ENCODE measurements at regions of chr20 and their contacts with region 1.

Region 1: DNA sequence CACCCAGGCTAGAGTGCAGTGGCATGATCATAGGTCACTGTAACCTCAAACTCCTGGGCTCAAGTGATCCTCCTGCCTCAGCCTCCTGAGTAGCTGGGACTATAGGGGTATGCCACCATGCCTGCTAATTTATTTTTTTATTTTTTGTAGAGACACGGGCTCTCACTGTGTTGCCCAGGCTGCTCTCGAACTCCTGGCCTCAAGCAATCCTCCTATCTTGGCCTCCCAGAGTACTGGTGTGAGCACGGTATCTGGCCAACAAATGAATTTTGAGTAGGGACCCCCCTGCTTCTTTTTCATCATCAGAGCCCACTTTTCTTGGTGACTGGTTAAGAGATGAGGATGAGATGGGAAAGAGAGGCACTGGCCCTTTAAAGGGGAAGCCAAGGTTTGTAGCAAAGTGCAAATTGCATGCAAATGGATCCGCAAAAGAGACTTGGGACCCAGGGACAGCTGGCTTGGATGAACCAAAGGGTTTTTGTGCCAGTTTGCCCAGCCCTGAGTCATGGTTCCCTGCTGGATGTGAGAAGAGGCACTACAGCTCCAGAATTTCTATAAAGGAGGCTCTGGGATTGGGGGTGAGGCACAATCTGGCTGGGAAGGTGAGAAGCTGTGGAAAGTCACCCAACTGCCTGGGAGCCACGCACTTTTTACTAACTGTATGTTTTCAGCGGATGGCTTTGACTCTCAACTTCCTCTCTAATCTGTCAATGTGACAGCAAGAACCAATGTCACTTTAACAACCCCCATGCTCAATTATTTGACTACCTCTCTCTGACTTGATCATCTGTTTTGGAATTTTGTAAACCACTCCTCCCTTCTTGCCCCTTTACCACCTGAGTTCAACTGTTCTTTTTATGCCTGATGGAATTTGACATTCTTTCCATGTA is 58.7 kb upstream of the RNF24 start:
- DNase-seq: no peak
- CTCF ChIP-seq: no peak

Region 2: DNA sequence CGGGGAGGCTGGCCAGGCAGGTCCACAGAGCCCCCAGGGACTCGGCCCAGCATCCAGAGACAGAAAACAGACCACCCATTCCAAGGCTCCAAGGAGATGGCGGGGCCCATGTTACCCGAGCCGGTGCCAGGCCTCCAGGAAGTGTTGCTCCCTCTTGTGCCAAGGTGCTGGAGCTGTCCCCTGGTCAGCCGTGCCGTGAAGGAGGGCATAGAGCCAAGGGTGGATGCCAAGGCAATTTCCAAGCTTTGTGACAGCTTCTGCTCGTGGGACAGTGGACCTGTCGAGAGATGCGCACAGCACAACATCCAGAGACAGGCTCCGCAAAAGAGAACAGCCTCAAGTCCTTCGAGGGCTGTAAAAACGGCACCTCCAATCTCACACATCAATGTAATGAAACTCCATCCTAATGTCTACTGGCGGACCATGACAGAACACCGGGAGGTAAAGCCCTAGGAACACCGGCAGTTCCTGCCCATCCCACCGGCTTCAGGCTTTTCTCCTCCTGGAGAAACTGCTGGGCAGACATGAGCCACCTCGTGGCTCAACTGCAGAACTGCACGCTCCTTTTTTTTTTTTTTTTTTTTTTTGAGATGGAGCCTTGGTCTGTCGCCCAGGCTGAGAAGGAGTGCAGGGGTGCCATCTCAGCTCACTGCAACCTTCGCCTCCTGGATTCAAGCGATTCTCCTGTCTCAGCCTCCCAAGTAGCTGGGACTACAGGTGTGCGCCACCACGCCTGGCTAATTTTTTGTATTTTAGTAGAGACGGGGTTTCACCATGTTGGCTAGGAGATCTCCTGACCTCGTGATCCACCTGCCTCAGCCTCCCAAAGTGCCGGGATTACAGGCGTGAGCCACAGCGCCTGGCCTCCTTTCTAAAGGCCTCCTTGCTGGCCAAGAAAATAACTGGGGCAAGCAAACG is 958.6 kb before region 1 on chr20:
- CTCF ChIA-PET with region 1: no interaction called
- POLR2A ChIA-PET with region 1: no interaction called
- DNase-seq: peak; percentile 82
- CTCF ChIP-seq: peak; percentile 60

Region 3: DNA sequence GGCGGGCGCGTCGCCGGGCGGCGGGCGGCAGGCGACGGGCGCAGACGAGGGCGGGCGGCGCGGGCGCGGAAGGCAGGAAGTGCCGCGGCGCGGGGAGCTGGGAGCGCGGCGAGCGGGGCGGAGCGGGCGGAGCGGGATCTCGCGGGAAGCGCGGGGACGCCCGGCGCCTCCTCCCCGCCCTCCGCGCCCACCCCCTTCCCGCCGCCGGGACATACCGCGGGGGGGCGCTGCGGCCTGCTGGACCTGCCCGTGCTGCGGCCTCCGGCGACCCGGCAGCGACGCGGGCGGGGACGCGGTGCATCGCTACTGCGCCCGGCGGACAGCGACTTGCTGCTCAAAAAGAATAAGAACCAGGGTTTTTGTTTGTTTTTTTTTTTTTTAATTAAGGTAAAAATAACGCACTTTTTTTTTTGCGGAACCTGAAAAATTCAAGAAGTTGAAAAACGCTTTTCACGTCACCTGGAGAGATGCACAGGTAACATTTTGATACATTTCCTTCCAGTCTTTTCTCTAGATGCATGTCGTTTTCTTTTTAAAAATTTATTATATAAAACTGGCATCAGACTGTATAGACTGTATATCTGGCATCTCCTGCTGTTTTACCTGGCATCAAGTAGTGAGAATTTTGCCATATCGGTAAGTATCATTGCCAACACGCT is 287.3 kb before region 1 on chr20 and contains the start of gene CENPB:
- CTCF ChIA-PET with region 1: interaction called, 30 read pairs
- POLR2A ChIA-PET with region 1: no interaction called
- DNase-seq: peak; percentile 95
- CTCF ChIP-seq: peak; percentile 71

Region 4: GRCh38 chr20:3866466-3866916 is 207.6 kb before region 1 on chr20:
- CTCF ChIA-PET with region 1: interaction called, 10 read pairs
- POLR2A ChIA-PET with region 1: no interaction called
- DNase-seq: no peak
- CTCF ChIP-seq: no peak

Region 5: GRCh38 chr20:4060064-4060795 is 13.9 kb before region 1 on chr20:
- CTCF ChIA-PET with region 1: interaction called, 24 read pairs
- POLR2A ChIA-PET with region 1: no interaction called
- DNase-seq: peak; percentile 68
- CTCF ChIP-seq: no peak

Region 6: DNA sequence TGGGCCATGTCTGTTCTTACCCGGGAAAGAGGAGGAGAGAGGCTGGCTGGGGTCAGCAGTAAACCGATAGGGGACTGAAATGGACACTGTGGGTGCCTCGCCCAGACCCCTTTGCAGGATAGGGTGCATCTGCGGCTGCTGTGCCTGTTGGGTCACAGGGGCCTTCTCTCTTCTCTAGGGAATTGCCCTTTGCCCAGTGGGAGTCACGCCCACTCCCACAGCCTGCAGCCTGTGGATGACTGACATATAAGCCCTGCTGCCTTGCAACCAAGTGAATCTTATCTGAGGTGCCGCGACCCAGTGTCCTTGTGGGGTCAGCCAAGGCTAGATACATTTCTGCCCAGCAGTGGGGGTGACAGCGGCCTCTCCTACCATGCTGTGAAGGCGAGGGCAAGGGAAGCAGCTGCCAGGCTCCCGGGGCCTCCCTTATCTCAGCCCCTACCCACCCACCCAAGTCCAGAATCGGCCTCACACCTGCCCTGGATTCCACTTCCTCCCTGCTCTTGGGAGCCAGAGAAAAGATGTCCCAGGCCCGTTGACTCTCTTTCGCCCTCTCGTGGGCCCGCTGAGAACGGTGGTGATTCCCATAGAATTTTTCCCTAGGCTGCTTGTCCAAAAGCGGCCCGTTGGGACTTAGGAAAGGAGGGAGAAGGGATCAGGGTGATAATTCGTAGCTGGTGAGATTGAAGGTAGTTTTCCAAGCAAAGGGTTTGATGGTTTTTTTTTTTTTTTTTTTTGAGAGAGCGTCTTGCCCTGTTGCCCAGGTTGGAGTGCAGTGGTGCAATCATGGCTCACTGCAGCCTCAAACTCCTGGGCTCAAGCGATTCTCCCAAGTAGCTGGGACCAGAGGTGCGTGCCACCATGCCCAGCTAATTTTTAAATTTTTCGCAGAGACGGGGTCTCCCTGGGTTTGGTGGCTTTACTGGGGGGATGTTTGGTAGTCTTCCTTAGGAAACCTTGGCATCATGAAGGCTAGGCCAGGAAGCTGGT is 17.7 kb after region 1 on chr20:
- CTCF ChIA-PET with region 1: interaction called, 107 read pairs
- POLR2A ChIA-PET with region 1: no interaction called
- DNase-seq: peak; percentile 72
- CTCF ChIP-seq: peak; percentile 61

Region 7: GRCh38 chr20:4112481-4113421 is 38.7 kb after region 1 on chr20:
- CTCF ChIA-PET with region 1: no interaction called
- POLR2A ChIA-PET with region 1: no interaction called
- DNase-seq: no peak
- CTCF ChIP-seq: no peak

Region 8: GRCh38 chr20:4740774-4741431 is 666.8 kb after region 1 on chr20:
- CTCF ChIA-PET with region 1: no interaction called
- POLR2A ChIA-PET with region 1: no interaction called
- DNase-seq: peak; percentile 59
- CTCF ChIP-seq: peak; percentile 81